ENCODE measurements at regions of chr20 and their contacts with region 1.

Region 1: DNA sequence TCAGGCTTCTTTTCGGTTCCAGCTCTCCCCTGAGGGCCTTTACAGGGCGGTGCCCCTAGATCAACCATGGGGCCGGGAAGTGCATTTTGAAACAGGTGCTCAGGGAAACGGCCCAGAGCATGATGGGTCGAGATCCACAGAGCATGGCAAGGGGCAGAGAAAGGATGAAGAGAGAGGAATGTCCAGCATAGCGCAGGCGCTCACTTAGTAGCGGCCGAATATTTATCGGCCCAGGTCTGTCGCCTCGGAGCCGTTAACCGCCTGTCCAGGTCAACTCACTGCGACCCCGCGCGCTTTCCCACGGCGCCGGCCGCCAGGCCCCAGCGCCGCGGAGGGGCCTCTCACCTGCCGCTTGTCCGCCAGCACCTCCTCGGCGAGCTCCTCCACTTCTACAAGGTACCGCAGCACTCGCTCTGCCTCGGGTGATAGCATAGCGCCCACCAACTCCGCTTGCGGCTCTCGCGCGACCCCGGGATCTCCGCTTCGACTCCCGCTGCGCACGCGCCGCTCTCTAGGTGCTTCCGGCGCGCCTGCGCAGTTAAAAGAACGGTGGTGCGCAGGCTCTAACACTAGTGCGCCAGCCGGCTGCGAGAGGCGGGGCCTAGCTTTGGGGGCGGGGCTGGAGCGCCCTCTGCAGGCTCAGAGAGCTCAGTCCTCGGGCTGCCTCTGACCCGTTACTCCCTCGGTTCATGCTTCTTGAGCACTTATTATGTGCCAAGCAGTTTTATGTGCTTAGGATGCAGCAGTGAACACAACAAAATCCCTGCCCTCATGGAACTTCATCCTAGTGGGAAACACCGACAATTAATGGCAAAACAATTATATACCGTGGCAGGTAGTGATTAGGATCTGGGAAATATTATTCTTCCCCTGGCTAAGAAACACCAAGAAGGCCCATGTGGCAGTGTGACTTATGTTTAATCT is at the start of gene PDRG1:
- DNase-seq: peak; percentile 93 to 99 (median 97)
- ATAC-seq: peak; percentile 99
- H3K4me3 ChIP-seq: peak within 1 kb of the TSS; percentile 92
- H3K4me3 Mint-ChIP-seq: peak within 1 kb of the TSS; percentile 98
- H3K27ac ChIP-seq: peak within 1 kb of the TSS in 1 of 2 donors; percentile 10
- H3K27ac Mint-ChIP-seq: peak within 1 kb of the TSS; percentile 84
- H3K4me1 ChIP-seq: peaks cover 26% of the 10 kb centered on the region
- H3K4me1 Mint-ChIP-seq: peaks cover 35% of the 10 kb centered on the region
- H3K27me3 ChIP-seq: peaks cover 0 to 6% of the 10 kb centered on the region in 2 experiments
- H3K27me3 Mint-ChIP-seq: peaks cover 20% of the 10 kb centered on the region
- CTCF ChIP-seq: peak; percentile 80
- total RNA-seq, gene PDRG1: 6.5 to 7.1 TPM

Region 2: GRCh38 chr20:31822421-31823330 is 129.1 kb before region 1 on chr20:
- CTCF ChIA-PET with region 1: interaction called, 3 read pairs
- POLR2A ChIA-PET with region 1: interaction called, 3 read pairs
- intact Hi-C with region 1: loop called in 1 of 2 experiments (anchors 2 kb)
- DNase-seq: peak; percentile 60 to 86 (median 68)
- ATAC-seq: peak; percentile 86
- H3K4me3 ChIP-seq: peak overlapping the region; percentile 5
- H3K4me3 Mint-ChIP-seq: no peak overlapping the region
- H3K27ac ChIP-seq: no peak overlapping the region
- H3K27ac Mint-ChIP-seq: no peak overlapping the region
- H3K4me1 ChIP-seq: peaks cover 10% of the 10 kb centered on the region
- H3K4me1 Mint-ChIP-seq: no peaks in the 10 kb centered on the region
- H3K27me3 ChIP-seq: peaks cover 0 to 3% of the 10 kb centered on the region in 2 experiments
- H3K27me3 Mint-ChIP-seq: no peaks in the 10 kb centered on the region
- CTCF ChIP-seq: peak; percentile 99

Region 3: DNA sequence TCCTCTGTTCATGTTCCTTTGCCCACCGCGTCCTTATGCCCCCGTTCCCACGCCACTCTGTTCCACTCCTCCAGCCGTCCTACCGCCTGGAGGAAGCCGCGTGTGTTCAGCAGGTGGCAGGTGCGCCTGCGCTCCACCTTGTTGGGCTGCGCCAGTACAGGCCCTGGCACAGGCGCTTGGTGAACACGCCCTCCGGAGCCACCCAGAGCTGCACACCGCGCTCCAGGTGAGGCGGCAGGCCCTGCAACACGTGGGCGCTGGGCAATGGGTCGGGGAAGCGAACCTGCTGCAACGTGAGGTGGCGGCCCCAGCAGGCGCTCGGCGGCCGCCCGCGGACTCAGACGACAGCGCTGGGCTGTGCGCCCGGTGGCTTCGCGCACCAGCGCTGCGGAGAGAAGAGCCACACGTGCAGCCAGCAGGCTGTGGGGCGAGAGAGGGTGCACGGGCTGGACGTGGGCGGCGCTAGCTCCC is 102.3 kb before region 1 on chr20:
- CTCF ChIA-PET with region 1: interaction called, 23 read pairs
- POLR2A ChIA-PET with region 1: interaction called, 5 read pairs
- intact Hi-C with region 1: loop called (anchors 1 to 2 kb)
- DNase-seq: no peak
- ATAC-seq: no peak
- H3K4me3 ChIP-seq: no peak overlapping the region
- H3K4me3 Mint-ChIP-seq: no peak overlapping the region
- H3K27ac ChIP-seq: no peak overlapping the region
- H3K27ac Mint-ChIP-seq: no peak overlapping the region
- H3K4me1 ChIP-seq: peaks cover 7% of the 10 kb centered on the region
- H3K4me1 Mint-ChIP-seq: no peaks in the 10 kb centered on the region
- H3K27me3 ChIP-seq: peaks cover 8 to 14% of the 10 kb centered on the region in 2 experiments
- H3K27me3 Mint-ChIP-seq: peaks cover 32% of the 10 kb centered on the region
- CTCF ChIP-seq: no peak

Region 4: DNA sequence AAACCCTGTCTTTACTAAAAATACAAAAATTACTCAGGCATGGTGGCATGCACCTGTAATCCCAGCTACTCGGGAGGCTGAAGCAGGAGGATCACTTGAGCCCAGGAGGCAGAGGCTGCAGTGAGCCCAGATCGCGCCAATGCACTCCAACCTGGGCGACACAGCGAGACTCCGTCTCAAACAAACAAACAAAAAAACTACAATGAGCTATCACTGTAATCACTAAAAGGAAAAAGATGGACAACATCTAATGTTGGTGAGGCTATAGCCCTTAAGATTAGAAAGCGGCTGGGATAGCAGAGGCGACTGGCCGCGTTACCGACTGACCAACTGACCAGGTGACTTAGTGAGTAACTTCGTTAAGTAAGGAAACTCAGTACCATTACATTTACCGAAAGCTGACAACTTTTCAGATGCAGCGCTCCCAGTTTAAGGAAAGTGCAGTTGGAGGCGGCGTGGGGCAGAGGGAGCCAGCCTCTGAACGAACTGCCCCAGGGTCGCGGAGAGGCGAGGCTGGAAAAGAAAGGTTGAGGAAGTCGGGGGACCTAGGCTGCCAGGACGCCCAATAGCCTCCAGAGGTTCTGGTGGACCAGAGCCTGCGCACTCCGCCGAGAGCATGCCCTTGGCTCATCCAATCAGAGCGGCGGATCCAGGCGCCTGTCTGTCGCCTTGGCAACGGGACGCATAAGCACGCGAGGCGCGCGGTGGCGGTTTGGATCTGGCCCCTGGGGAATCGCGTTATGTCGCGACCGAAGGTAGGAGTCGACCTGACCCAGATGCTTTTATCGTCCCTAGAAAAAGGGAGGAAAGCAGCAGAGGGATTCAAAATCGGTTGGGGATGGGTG is 72.4 kb before region 1 on chr20:
- CTCF ChIA-PET with region 1: interaction called, 5 read pairs
- POLR2A ChIA-PET with region 1: interaction called, 5 read pairs
- intact Hi-C with region 1: loop called in 1 of 2 experiments (anchors 1 kb)
- DNase-seq: peak; percentile 53 to 93 (median 66)
- ATAC-seq: peak; percentile 88
- H3K4me3 ChIP-seq: peak overlapping the region; percentile 69
- H3K4me3 Mint-ChIP-seq: peak overlapping the region; percentile 92
- H3K27ac ChIP-seq: no peak overlapping the region
- H3K27ac Mint-ChIP-seq: peak overlapping the region; percentile 48
- H3K4me1 ChIP-seq: peaks cover 15% of the 10 kb centered on the region
- H3K4me1 Mint-ChIP-seq: peaks cover 12% of the 10 kb centered on the region
- H3K27me3 ChIP-seq: peaks cover 0 to 1% of the 10 kb centered on the region in 2 experiments
- H3K27me3 Mint-ChIP-seq: peaks cover 18% of the 10 kb centered on the region
- CTCF ChIP-seq: no peak

Region 5: DNA sequence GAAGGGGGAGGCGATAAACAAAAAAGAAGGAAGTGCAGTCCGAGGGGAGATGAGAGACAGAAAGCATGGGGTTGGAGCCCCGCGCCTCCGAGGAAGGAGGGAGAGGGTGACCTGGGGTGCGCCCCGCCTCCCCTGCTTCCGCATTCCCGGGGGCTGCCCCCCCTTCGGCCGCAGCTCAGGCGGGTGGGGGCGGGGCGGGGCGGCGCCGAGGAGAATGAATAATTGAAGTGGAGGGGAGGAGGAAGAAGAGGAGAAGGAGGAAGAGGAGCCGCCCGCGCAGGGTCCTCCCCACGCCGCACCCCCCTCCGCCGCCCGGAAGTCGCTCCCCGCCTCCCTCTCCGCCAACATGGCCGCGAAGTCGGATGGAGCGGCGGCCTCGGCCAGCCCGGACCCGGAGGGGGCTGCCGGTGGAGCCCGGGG is 16.0 kb after region 1 on chr20 and contains the start of gene XKR7:
- CTCF ChIA-PET with region 1: interaction called, 4 read pairs
- POLR2A ChIA-PET with region 1: no interaction called
- intact Hi-C with region 1: loop called in 1 of 2 experiments (anchors 2 kb)
- DNase-seq: peak in 5 of 14 experiments; percentile 1 to 37 (median 10)
- ATAC-seq: no peak
- H3K4me3 ChIP-seq: peak within 1 kb of the TSS; percentile 20
- H3K4me3 Mint-ChIP-seq: peak within 1 kb of the TSS; percentile 84
- H3K27ac ChIP-seq: no peak within 1 kb of the TSS
- H3K27ac Mint-ChIP-seq: no peak within 1 kb of the TSS
- H3K4me1 ChIP-seq: peaks cover 10% of the 10 kb centered on the region
- H3K4me1 Mint-ChIP-seq: peaks cover 10% of the 10 kb centered on the region
- H3K27me3 ChIP-seq: peaks cover 30 to 55% of the 10 kb centered on the region in 2 experiments
- H3K27me3 Mint-ChIP-seq: peaks cover 84% of the 10 kb centered on the region
- CTCF ChIP-seq: no peak
- total RNA-seq, gene XKR7: not detected

Region 6: GRCh38 chr20:32109392-32110172 is 157.8 kb after region 1 on chr20 and contains the start of gene TM9SF4:
- CTCF ChIA-PET with region 1: no interaction called
- POLR2A ChIA-PET with region 1: interaction called, 3 read pairs
- intact Hi-C with region 1: loop called in 1 of 2 experiments (anchors 2 kb)
- DNase-seq: peak; percentile 77 to 96 (median 88)
- ATAC-seq: peak; percentile 89
- H3K4me3 ChIP-seq: peak within 1 kb of the TSS; percentile 97
- H3K4me3 Mint-ChIP-seq: peak within 1 kb of the TSS; percentile 92
- H3K27ac ChIP-seq: peak within 1 kb of the TSS; percentile 100
- H3K27ac Mint-ChIP-seq: peak within 1 kb of the TSS; percentile 93
- H3K4me1 ChIP-seq: peaks cover 27% of the 10 kb centered on the region
- H3K4me1 Mint-ChIP-seq: peaks cover 40% of the 10 kb centered on the region
- H3K27me3 ChIP-seq: no peaks in the 10 kb centered on the region
- H3K27me3 Mint-ChIP-seq: no peaks in the 10 kb centered on the region
- CTCF ChIP-seq: no peak
- total RNA-seq, gene TM9SF4: 22.4 to 24.5 TPM

Region 7: GRCh38 chr20:32132911-32133549 is 181.2 kb after region 1 on chr20:
- CTCF ChIA-PET with region 1: no interaction called
- POLR2A ChIA-PET with region 1: no interaction called
- intact Hi-C with region 1: no loop called
- DNase-seq: no peak
- ATAC-seq: no peak
- H3K4me3 ChIP-seq: no peak overlapping the region
- H3K4me3 Mint-ChIP-seq: no peak overlapping the region
- H3K27ac ChIP-seq: no peak overlapping the region
- H3K27ac Mint-ChIP-seq: no peak overlapping the region
- H3K4me1 ChIP-seq: no peaks in the 10 kb centered on the region
- H3K4me1 Mint-ChIP-seq: peaks cover 16% of the 10 kb centered on the region
- H3K27me3 ChIP-seq: no peaks in the 10 kb centered on the region
- H3K27me3 Mint-ChIP-seq: no peaks in the 10 kb centered on the region
- CTCF ChIP-seq: no peak

Region 8: GRCh38 chr20:32207626-32208498 is 256.1 kb after region 1 on chr20 and contains the starts of genes PLAGL2 and POFUT1:
- CTCF ChIA-PET with region 1: no interaction called
- POLR2A ChIA-PET with region 1: no interaction called
- intact Hi-C with region 1: loop called in 1 of 2 experiments (anchors 5 kb)
- DNase-seq: peak; percentile 74 to 95 (median 87)
- ATAC-seq: peak; percentile 95
- H3K4me3 ChIP-seq: peak within 1 kb of the TSS; percentile 94
- H3K4me3 Mint-ChIP-seq: peak within 1 kb of the TSS; percentile 96
- H3K27ac ChIP-seq: peak within 1 kb of the TSS; percentile 50 to 60
- H3K27ac Mint-ChIP-seq: peak within 1 kb of the TSS; percentile 92
- H3K4me1 ChIP-seq: peaks cover 66% of the 10 kb centered on the region
- H3K4me1 Mint-ChIP-seq: peaks cover 79% of the 10 kb centered on the region
- H3K27me3 ChIP-seq: no peaks in the 10 kb centered on the region
- H3K27me3 Mint-ChIP-seq: no peaks in the 10 kb centered on the region
- CTCF ChIP-seq: no peak
- total RNA-seq, gene PLAGL2: 15.6 to 16.9 TPM
- total RNA-seq, gene POFUT1: 7.5 to 8.8 TPM

Measured in CD4-positive, alpha-beta T cell (primary cell).